ENCODE measurements at regions of chr18 and their contacts with region 1.

Region 1: DNA sequence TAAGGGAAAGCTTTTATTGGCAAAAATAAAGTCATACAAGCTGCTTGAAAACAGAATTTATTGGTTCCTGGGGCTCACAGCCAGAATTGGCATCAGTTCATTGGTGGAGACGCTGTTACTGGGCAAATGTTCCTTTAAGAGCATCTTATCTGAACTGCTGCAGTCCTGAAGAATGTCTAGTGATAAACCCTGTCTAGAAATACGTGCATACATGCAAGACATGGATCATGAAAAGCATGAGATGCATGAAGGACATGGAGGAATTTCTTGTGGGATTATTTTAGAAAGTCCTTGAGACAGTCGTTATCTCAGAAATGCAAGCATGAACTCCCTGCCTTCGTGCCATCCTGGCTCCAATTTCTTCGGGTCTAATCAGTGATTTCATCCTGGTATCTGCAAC is 32.5 kb upstream of the FHOD3 start:
- DNase-seq: peak in 1 of 2 donors; percentile 32
- H3K4me3 ChIP-seq: no peak overlapping the region
- H3K27ac ChIP-seq: no peak overlapping the region
- H3K4me1 ChIP-seq: no peaks in the 10 kb centered on the region
- H3K27me3 ChIP-seq: no peaks in the 10 kb centered on the region
- CTCF ChIP-seq: no peak
- POLR2A ChIP-seq: no peak

Region 2: DNA sequence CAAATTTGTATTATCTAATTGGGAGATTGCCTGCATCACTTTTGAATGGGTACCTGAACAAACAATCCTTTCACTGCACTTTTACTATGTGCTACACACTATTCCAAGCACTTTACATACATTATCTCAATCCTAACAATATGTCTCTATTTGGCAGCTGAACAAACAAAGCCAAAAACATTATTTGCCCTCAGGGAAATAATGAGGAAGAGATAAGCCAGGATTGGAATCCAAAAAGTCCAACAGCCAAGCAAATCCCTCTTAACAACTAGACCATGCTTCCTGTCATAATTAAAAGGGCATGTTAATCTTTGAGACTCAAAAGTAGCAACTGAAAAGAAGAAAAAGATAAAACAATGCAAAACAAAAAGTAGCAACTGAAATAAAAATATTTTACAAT is 229.8 kb before region 1 on chr18:
- intact Hi-C with region 1: no loop called
- DNase-seq: no peak
- H3K4me3 ChIP-seq: no peak overlapping the region
- H3K27ac ChIP-seq: no peak overlapping the region
- H3K4me1 ChIP-seq: peaks cover 16% of the 10 kb centered on the region
- H3K27me3 ChIP-seq: no peaks in the 10 kb centered on the region
- CTCF ChIP-seq: no peak
- POLR2A ChIP-seq: no peak

Region 3: GRCh38 chr18:36162981-36163380 is 102.0 kb before region 1 on chr18:
- intact Hi-C with region 1: loop called (anchors 5 kb)
- DNase-seq: no peak
- H3K4me3 ChIP-seq: no peak overlapping the region
- H3K27ac ChIP-seq: no peak overlapping the region
- H3K4me1 ChIP-seq: peaks cover 3% of the 10 kb centered on the region
- H3K27me3 ChIP-seq: no peaks in the 10 kb centered on the region
- CTCF ChIP-seq: no peak
- POLR2A ChIP-seq: no peak